GM12878 (cell line): ENCODE measurements at regions of chr6 and their contacts with region 1.

Region 1: GRCh38 chr6:12504319-12504966 is 212.1 kb upstream of the PHACTR1 start:
- DNase-seq: peak; percentile 32
- ATAC-seq: peak; percentile 99
- H3K4me3 ChIP-seq: no peak overlapping the region
- H3K27ac ChIP-seq: no peak overlapping the region
- H3K4me1 ChIP-seq: no peaks in the 10 kb centered on the region
- H3K27me3 ChIP-seq: no peaks in the 10 kb centered on the region
- CTCF ChIP-seq: peak; percentile 58 to 76 (median 68)
- EP300 ChIP-seq: no peak
- POLR2A ChIP-seq: no peak
- RAD21 ChIP-seq: peak; percentile 65

Region 2: GRCh38 chr6:12296255-12296573 is 208.2 kb before region 1 on chr6:
- CTCF ChIA-PET with region 1: interaction called, 90 read pairs
- POLR2A ChIA-PET with region 1: interaction called, 4 read pairs
- RAD21 ChIA-PET with region 1: interaction called, 73 read pairs
- SMC1A ChIA-PET with region 1: interaction called, 51 read pairs
- in situ Hi-C with region 1: no loop called
- intact Hi-C with region 1: loop called (anchors 1 kb)
- DNase-seq: no peak
- ATAC-seq: no peak
- H3K4me3 ChIP-seq: no peak overlapping the region
- H3K27ac ChIP-seq: no peak overlapping the region
- H3K4me1 ChIP-seq: peaks cover 8% of the 10 kb centered on the region
- H3K27me3 ChIP-seq: no peaks in the 10 kb centered on the region
- CTCF ChIP-seq: no peak
- EP300 ChIP-seq: no peak
- POLR2A ChIP-seq: no peak
- RAD21 ChIP-seq: no peak

Region 3: GRCh38 chr6:12313992-12314805 is 190.2 kb before region 1 on chr6:
- CTCF ChIA-PET with region 1: interaction called, 50 read pairs
- POLR2A ChIA-PET with region 1: no interaction called
- RAD21 ChIA-PET with region 1: interaction called, 15 read pairs
- SMC1A ChIA-PET with region 1: interaction called, 21 read pairs
- in situ Hi-C with region 1: no loop called
- intact Hi-C with region 1: no loop called
- DNase-seq: no peak
- ATAC-seq: no peak
- H3K4me3 ChIP-seq: no peak overlapping the region
- H3K27ac ChIP-seq: no peak overlapping the region
- H3K4me1 ChIP-seq: no peaks in the 10 kb centered on the region
- H3K27me3 ChIP-seq: no peaks in the 10 kb centered on the region
- CTCF ChIP-seq: no peak
- EP300 ChIP-seq: no peak
- POLR2A ChIP-seq: no peak
- RAD21 ChIP-seq: no peak

Region 4: DNA sequence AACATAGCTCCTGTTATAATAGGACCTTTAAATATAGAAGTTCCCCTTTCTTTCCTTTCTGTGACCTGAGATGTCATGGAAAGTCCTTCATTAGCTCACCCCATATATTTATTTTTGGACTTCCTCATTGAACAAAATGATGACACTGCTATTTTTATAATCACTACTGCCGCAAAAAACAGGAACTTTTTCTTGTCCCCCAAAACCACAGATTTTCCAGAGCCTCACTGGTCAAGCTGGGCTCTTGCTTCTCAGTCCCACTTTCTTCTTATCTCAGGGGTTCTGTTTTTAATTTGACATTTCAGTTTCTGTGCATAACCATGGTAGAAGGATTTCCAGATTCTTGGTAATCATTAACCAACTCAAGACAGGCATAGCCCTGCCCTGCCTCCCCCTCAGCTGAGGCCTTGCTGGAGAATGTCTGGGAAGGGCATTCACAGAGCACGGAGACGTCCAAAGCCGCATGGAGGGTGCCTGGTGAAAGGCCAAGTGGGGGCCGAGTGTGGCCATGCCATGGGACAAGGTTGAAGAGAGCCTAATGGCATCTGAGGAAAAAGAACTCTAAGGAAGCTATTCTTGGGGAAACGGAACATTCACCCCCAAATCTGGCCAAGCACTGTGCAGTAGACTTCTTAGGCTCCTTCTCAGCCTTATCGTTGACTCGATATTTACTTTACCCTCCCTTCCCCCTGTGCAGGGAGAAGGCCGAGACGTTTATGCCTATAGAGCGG is 140.6 kb before region 1 on chr6:
- CTCF ChIA-PET with region 1: interaction called, 27 read pairs
- POLR2A ChIA-PET with region 1: no interaction called
- RAD21 ChIA-PET with region 1: interaction called, 11 read pairs
- SMC1A ChIA-PET with region 1: interaction called, 10 read pairs
- in situ Hi-C with region 1: no loop called
- intact Hi-C with region 1: loop called (anchors 5 kb)
- DNase-seq: peak; percentile 95
- ATAC-seq: peak; percentile 88
- H3K4me3 ChIP-seq: no peak overlapping the region
- H3K27ac ChIP-seq: peak overlapping the region; percentile 70
- H3K4me1 ChIP-seq: peaks cover 38% of the 10 kb centered on the region
- H3K27me3 ChIP-seq: no peaks in the 10 kb centered on the region
- CTCF ChIP-seq: no peak
- EP300 ChIP-seq: peak; percentile 84 to 93
- POLR2A ChIP-seq: no peak
- RAD21 ChIP-seq: 0 out of 2 replicates have a peak, but pooled peaks have one; percentile 6

Region 5: GRCh38 chr6:12369781-12370262 is 134.6 kb before region 1 on chr6:
- CTCF ChIA-PET with region 1: interaction called, 27 read pairs
- POLR2A ChIA-PET with region 1: no interaction called
- RAD21 ChIA-PET with region 1: interaction called, 24 read pairs
- SMC1A ChIA-PET with region 1: interaction called, 16 read pairs
- in situ Hi-C with region 1: no loop called
- intact Hi-C with region 1: loop called (anchors 5 kb)
- DNase-seq: peak; percentile 73
- ATAC-seq: peak; percentile 92
- H3K4me3 ChIP-seq: no peak overlapping the region
- H3K27ac ChIP-seq: peak overlapping the region; percentile 35
- H3K4me1 ChIP-seq: peaks cover 13% of the 10 kb centered on the region
- H3K27me3 ChIP-seq: no peaks in the 10 kb centered on the region
- CTCF ChIP-seq: peak; percentile 25 to 41 (median 30); a peak in 4 of 6 replicates
- EP300 ChIP-seq: peak; percentile 55 to 78; a peak in 2 of 4 replicates
- POLR2A ChIP-seq: no peak
- RAD21 ChIP-seq: peak; percentile 62

Region 6: DNA sequence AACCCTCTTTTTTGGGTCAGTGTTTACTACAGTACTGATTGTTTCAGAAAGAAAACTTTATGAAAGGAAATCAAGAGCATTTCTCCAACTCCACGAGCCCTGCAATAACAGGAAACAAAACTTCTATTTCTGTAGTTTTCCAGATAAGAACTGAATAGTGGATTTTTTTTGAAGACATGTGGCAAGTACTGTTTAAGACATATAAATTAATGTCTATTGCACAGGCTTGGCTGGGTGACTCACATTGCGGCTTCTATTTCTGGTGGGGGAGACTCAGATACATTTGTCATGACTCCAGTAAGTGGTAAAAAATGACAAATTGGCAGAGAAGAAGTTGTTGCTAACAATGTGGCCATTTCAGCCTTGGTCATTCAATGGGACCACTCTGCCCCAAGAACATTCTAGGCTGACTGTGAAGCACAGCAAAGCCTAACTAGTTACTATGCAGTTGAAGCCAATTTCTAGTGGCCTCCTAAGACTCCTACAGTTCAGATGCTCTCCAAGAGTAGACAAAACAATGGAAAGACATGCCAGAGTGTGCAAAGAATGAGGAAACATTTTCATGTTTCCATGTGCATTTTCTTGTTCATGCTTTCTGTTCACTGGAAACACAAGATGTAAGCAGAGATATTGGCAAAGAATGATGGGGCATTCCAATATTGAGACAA is 13.4 kb before region 1 on chr6:
- CTCF ChIA-PET with region 1: interaction called, 12 read pairs
- POLR2A ChIA-PET with region 1: no interaction called
- RAD21 ChIA-PET with region 1: interaction called, 4 read pairs
- SMC1A ChIA-PET with region 1: interaction called, 66 read pairs
- in situ Hi-C with region 1: no loop called
- intact Hi-C with region 1: no loop called
- DNase-seq: no peak
- ATAC-seq: no peak
- H3K4me3 ChIP-seq: no peak overlapping the region
- H3K27ac ChIP-seq: no peak overlapping the region
- H3K4me1 ChIP-seq: no peaks in the 10 kb centered on the region
- H3K27me3 ChIP-seq: no peaks in the 10 kb centered on the region
- CTCF ChIP-seq: no peak
- EP300 ChIP-seq: no peak
- POLR2A ChIP-seq: no peak
- RAD21 ChIP-seq: no peak

Region 7: DNA sequence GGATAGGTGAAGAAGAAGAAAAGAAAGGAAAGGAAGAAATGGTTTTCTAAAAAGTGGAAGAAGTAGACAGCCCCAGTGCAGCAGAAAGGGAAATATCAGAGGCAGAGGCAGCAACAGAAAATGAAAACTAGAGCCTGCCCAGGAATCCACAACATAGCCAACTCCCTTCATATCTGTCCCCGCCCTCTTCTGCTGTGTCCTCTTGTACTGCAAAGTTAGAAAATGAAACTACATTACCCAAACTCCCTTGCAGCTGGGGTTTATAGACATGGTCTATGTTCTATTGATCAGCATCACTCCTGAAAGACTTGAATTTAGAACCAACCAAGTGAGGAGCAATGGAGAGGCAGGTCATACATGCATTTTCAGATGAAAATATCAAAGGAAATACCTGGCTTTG is 11.6 kb after region 1 on chr6:
- CTCF ChIA-PET with region 1: interaction called, 15 read pairs
- POLR2A ChIA-PET with region 1: interaction called, 3 read pairs
- RAD21 ChIA-PET with region 1: no interaction called
- SMC1A ChIA-PET with region 1: interaction called, 5 read pairs
- in situ Hi-C with region 1: no loop called
- intact Hi-C with region 1: no loop called
- DNase-seq: no peak
- ATAC-seq: peak; percentile 84
- H3K4me3 ChIP-seq: no peak overlapping the region
- H3K27ac ChIP-seq: no peak overlapping the region
- H3K4me1 ChIP-seq: no peaks in the 10 kb centered on the region
- H3K27me3 ChIP-seq: no peaks in the 10 kb centered on the region
- CTCF ChIP-seq: no peak
- EP300 ChIP-seq: no peak
- POLR2A ChIP-seq: no peak
- RAD21 ChIP-seq: no peak

Region 8: GRCh38 chr6:12621754-12622153 is 117.3 kb after region 1 on chr6:
- CTCF ChIA-PET with region 1: no interaction called
- POLR2A ChIA-PET with region 1: no interaction called
- RAD21 ChIA-PET with region 1: no interaction called
- SMC1A ChIA-PET with region 1: no interaction called
- in situ Hi-C with region 1: no loop called
- intact Hi-C with region 1: no loop called
- DNase-seq: no peak
- ATAC-seq: peak; percentile 54
- H3K4me3 ChIP-seq: no peak overlapping the region
- H3K27ac ChIP-seq: no peak overlapping the region
- H3K4me1 ChIP-seq: no peaks in the 10 kb centered on the region
- H3K27me3 ChIP-seq: no peaks in the 10 kb centered on the region
- CTCF ChIP-seq: no peak
- EP300 ChIP-seq: no peak
- POLR2A ChIP-seq: no peak
- RAD21 ChIP-seq: no peak